Mucosa of descending colon (tissue), 3 donors: ENCODE measurements at regions of chr22 and their contacts with region 1.

Region 1: GRCh38 chr22:35350539-35351503 is 30.1 kb upstream of the HMOX1 start:
- DNase-seq: peak; percentile 84 to 94 (median 94)
- ATAC-seq: peak; percentile 94
- H3K4me3 ChIP-seq: no peak overlapping the region
- H3K4me1 ChIP-seq: peaks cover 4% of the 10 kb centered on the region
- CTCF ChIP-seq: peak; percentile 80

Region 2: DNA sequence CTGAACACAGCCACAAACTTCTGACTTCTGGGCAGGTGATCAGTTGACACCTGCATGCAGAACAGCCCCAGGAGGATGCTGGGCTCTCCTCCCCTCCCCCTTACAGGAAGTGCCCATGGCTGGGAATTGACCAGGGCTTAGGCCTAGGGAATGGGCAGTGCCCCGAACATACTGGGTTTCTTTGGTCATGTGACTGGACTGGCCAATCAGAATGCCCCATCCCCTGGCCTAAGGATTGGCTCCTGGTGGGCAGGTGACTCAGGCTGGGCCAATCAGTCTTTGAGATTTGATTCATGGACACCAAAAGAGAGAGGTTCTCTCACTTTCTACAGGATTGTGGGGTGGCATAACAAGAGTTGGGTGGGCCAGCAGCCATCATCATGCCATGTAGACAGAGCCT is 86.2 kb after region 1 on chr22:
- intact Hi-C with region 1: no loop called
- DNase-seq: no peak
- ATAC-seq: peak; percentile 39
- H3K4me3 ChIP-seq: no peak overlapping the region
- H3K4me1 ChIP-seq: no peaks in the 10 kb centered on the region
- CTCF ChIP-seq: no peak

Region 3: DNA sequence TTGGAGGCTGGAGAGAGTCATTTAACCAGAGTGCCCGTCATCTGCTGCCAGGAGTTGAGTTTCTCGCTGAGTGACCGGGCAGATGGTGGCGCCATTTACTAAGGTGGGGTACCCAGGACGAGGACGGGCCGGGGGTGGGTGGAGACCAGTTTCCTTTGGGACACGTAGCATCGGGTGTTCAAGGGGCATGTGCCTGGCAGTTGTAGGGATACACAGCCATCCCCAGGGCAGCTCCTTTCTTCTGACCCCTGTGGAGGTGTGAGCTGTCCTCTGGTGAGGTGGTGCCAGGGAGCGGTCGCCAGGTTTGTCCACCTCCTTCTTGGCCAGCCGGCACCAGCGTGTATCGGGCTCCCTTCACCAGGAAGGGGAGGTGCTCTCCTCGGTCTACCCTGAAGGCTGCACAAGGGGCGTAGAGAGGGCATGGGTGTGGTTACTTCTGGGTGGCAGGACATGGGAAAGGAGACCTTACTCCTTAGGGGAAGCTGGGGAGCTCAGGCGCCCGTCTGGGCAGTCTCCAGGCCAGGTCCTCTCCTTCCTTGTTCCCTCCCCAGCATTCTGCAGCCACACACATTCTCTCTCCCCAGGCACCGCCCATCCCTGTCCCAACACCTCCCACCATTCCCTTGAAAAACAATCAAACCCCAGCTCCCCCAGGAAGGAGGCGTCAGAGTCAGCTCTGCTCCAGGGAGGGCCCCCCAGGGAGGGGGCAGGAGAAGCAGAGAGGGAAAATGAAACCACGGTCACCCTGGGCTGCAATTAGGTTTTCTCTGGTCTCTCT is 276.6 kb after region 1 on chr22:
- intact Hi-C with region 1: loop called in 1 of 2 experiments (anchors 10 kb)
- DNase-seq: peak; percentile 83 to 92 (median 89)
- ATAC-seq: peak; percentile 86
- H3K4me3 ChIP-seq: peak overlapping the region; percentile 18
- H3K4me1 ChIP-seq: peaks cover 4% of the 10 kb centered on the region
- CTCF ChIP-seq: no peak